ENCODE measurements at regions of chrX and their contacts with region 1.

Region 1: GRCh38 chrX:43958529-43958928 is 14.7 kb downstream of the NDP start:
- DNase-seq: no peak
- ATAC-seq: peak; percentile 31
- H3K4me3 Mint-ChIP-seq: no peak overlapping the region
- H3K27ac Mint-ChIP-seq: no peak overlapping the region
- H3K4me1 Mint-ChIP-seq: peaks cover 2% of the 10 kb centered on the region
- H3K27me3 Mint-ChIP-seq: peaks cover 5% of the 10 kb centered on the region
- CTCF ChIP-seq: no peak

Region 2: GRCh38 chrX:44025555-44025954 is 67.0 kb after region 1 on chrX:
- CTCF ChIA-PET with region 1: interaction called, 4 read pairs
- POLR2A ChIA-PET with region 1: no interaction called
- intact Hi-C with region 1: loop called (anchors 1 kb)
- DNase-seq: no peak
- ATAC-seq: no peak
- H3K4me3 Mint-ChIP-seq: no peak overlapping the region
- H3K27ac Mint-ChIP-seq: no peak overlapping the region
- H3K4me1 Mint-ChIP-seq: no peaks in the 10 kb centered on the region
- H3K27me3 Mint-ChIP-seq: no peaks in the 10 kb centered on the region
- CTCF ChIP-seq: no peak

Region 3: DNA sequence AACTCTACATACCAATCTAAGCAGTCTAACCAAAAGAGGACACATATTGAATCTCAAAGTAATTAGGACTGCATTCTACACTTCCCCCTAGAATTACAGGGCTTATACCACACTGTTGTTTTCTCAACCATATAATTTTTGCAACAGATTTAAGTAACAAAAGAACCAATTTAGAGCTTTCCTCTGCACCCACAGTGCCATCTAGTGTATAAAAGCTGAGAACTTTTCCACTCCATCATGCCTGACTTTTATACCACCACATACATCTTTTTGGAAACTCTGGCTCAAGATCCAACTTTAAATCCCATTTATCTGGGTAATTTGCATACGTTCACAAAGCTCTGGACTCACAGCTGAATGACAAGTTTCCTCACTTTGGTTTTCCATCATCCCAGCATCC is 285.5 kb after region 1 on chrX:
- CTCF ChIA-PET with region 1: interaction called, 13 read pairs
- POLR2A ChIA-PET with region 1: no interaction called
- intact Hi-C with region 1: loop called (anchors 2 kb)
- DNase-seq: no peak
- ATAC-seq: no peak
- H3K4me3 Mint-ChIP-seq: no peak overlapping the region
- H3K27ac Mint-ChIP-seq: no peak overlapping the region
- H3K4me1 Mint-ChIP-seq: peaks cover 5% of the 10 kb centered on the region
- H3K27me3 Mint-ChIP-seq: no peaks in the 10 kb centered on the region
- CTCF ChIP-seq: no peak

Region 4: DNA sequence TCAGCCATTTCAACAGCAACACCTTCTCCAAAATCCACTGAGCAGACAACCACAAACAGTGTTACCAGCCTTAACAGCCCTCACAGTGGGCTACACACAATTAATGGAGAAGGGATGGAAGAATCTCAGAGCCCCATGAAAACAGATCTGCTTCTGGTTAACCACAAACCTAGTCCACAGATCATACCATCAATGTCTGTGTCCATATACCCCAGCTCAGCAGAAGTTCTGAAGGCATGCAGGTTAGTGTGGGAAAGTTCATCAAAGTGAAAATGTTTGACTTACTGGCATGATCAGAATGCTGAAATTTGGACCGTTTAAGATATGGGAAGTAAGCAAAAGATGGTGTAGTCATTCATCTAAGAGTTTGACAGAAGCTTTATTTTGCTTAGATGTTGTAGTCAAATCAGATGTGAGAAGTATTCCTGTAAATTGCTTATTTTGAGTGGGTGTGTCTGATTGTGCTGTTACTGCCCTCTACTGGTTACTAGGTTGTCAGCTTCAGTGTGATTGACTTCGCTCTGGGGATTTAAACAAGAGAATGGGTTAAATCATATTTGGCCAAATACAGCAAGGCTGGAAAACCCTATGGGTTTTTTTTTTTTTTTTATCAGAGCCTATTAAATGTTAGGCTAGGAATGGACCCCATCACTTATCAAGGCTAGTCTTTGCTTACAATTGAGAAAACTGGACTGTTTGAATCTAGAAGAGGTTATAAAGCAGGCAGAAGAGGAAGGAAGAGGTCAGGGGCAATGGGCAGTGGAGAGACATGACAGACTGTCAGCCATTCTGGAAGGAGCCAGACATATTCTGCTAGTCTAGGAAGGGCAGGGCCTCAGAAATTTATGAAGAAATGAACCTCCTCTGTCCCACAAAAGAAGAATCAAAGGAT is 1111.8 kb after region 1 on chrX:
- CTCF ChIA-PET with region 1: no interaction called
- POLR2A ChIA-PET with region 1: no interaction called
- intact Hi-C with region 1: loop called (anchors 10 kb)
- DNase-seq: no peak
- ATAC-seq: peak; percentile 40
- H3K4me3 Mint-ChIP-seq: no peak overlapping the region
- H3K27ac Mint-ChIP-seq: peak overlapping the region; percentile 37
- H3K4me1 Mint-ChIP-seq: peaks cover 38% of the 10 kb centered on the region
- H3K27me3 Mint-ChIP-seq: no peaks in the 10 kb centered on the region
- CTCF ChIP-seq: no peak

Region 5: DNA sequence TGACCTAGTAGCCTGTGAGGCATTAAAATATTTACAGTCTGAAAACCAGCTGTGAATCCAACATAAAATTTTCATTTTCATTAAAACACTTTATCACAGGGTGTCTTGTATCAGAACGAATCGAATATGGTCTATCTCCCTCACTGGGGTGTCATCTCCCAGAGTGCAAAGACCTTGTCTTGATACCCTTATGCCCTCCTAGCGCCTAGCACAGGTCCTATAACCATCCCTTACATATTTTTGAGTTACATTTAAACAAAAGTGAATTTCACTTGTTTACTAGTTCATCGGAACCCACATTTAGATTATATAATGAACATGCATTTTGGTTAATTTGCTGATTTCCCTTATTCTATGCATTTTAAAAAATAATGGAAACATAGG is 1228.1 kb after region 1 on chrX:
- CTCF ChIA-PET with region 1: interaction called, 6 read pairs
- POLR2A ChIA-PET with region 1: no interaction called
- intact Hi-C with region 1: loop called (anchors 2 kb)
- DNase-seq: no peak
- ATAC-seq: no peak
- H3K4me3 Mint-ChIP-seq: peak overlapping the region; percentile 83
- H3K27ac Mint-ChIP-seq: no peak overlapping the region
- H3K4me1 Mint-ChIP-seq: peaks cover 17% of the 10 kb centered on the region
- H3K27me3 Mint-ChIP-seq: no peaks in the 10 kb centered on the region
- CTCF ChIP-seq: peak; percentile 21

Measured in activated B cell treated with CpG ODN at 0.5 μM for 24 hours (primary cell).